GM10248 (cell line): ENCODE measurements at regions of chr22 and their contacts with region 1.

Region 1: GRCh38 chr22:35894937-35895708 is 133.5 kb downstream of the RBFOX2 start:
- DNase-seq: no peak
- CTCF ChIP-seq: no peak

Region 2: GRCh38 chr22:35879351-35879750 is 15.8 kb before region 1 on chr22:
- CTCF ChIA-PET with region 1: interaction called, 12 read pairs
- POLR2A ChIA-PET with region 1: no interaction called
- DNase-seq: no peak
- CTCF ChIP-seq: no peak